ENCODE measurements at regions of chr1 and their contacts with region 1.

Region 1: GRCh38 chr1:180881806-180882509 is 30.7 kb upstream of the KIAA1614 start:
- DNase-seq: peak; percentile 43 to 64 (median 62)
- H3K4me3 ChIP-seq: no peak overlapping the region
- H3K27ac ChIP-seq: no peak overlapping the region
- H3K4me1 ChIP-seq: no peaks in the 10 kb centered on the region
- H3K27me3 ChIP-seq: no peaks in the 10 kb centered on the region

Region 2: DNA sequence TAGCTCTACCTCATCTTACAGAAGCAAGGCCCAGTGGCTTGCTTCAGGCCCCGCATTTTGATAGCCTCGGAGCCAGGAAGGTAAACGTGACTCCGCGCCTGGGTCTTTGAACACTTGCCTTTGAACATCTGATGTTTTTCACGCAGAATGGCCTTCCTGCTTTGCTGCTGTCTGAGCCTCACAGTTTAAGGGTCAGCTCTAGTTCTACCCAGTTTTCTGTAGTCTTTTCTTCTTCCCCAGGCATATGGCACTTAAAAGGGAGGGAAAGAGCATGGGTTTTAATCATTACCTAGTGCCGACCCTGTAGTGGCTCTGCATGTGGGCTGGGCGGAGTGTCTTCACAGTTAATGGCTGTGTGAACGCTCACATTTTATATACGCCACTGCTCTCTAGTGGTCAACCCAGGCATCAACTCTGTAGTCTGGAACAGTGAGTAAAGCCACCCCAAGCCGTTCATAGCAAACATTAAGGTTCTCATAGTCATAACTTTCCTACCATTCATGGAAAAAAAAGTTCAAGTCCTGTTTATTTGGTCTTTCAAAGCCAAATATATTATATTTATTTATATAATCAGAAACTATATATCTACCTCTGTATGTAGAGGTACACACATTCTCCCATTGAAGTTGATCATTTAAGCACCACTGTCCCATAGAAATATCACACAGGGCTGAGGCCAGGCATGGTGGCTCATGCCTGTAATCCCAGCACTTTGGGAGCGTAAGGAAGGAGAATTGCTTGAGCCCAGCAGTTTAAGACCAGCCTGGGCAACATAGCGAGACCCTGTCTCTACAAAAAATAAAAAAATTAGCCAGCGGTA is 284.6 kb after region 1 on chr1:
- CTCF ChIA-PET with region 1: interaction called, 13 read pairs
- POLR2A ChIA-PET with region 1: no interaction called
- DNase-seq: peak; percentile 79 to 90 (median 89)
- H3K4me3 ChIP-seq: no peak overlapping the region
- H3K27ac ChIP-seq: no peak overlapping the region
- H3K4me1 ChIP-seq: peaks cover 0 to 4% (median 0%) of the 10 kb centered on the region in 4 experiments
- H3K27me3 ChIP-seq: peaks cover 0 to 6% (median 0%) of the 10 kb centered on the region in 5 experiments

Measured in common myeloid progenitor, CD34-positive (primary cell).